ENCODE measurements at regions of chr14 and their contacts with region 1.

Region 1: GRCh38 chr14:69090187-69090789 is 62.6 kb downstream of the DCAF5 start:
- DNase-seq: peak; percentile 70
- H3K4me3 Mint-ChIP-seq: no peak overlapping the region
- H3K27ac Mint-ChIP-seq: no peak overlapping the region
- H3K4me1 Mint-ChIP-seq: peaks cover 34% of the 10 kb centered on the region
- H3K27me3 Mint-ChIP-seq: no peaks in the 10 kb centered on the region
- CTCF ChIP-seq: peak; percentile 64

Region 2: DNA sequence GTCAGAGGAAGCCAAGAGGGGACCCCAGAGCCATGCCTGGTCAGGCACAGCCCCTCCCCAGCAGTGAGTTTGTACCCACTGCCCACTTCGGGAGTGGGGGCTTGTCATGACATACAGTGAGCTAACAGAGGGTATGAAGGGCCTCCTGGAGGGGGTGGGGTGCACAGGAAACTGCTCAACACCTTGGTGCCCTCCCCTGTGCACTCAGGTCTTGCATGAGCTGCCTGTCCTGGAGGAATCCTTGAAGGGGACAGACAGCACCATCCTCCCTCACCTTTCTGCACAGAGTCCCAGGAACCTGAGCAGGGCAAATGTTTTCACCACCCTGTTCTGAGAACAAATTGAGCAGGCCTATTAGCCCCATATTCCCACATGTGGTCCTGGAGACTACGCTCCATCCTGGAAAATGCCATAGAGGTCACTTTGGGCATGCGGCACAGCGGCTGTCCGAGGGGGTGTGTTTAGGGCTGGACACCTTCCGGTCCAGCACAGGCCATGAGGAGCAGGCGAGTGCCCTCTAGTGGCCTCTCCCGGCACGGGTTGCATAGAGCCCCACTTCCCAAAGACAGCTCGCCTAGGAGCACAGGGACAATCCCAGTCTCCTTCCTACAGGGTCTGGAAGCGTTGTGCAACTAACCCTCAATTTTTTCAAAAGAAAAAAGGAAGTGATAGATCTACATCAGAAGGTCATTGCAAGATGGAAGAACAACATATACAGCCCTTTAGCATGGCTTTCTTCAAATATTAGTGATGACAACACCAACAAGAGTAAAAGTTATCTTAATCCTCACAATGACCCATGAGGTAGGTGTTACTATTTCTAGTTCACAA is 265.6 kb before region 1 on chr14:
- CTCF ChIA-PET with region 1: no interaction called
- intact Hi-C with region 1: no loop called
- DNase-seq: peak; percentile 90
- H3K4me3 Mint-ChIP-seq: no peak overlapping the region
- H3K27ac Mint-ChIP-seq: peak overlapping the region; percentile 50
- H3K4me1 Mint-ChIP-seq: peaks cover 14% of the 10 kb centered on the region
- H3K27me3 Mint-ChIP-seq: no peaks in the 10 kb centered on the region
- CTCF ChIP-seq: peak; percentile 41

Region 3: DNA sequence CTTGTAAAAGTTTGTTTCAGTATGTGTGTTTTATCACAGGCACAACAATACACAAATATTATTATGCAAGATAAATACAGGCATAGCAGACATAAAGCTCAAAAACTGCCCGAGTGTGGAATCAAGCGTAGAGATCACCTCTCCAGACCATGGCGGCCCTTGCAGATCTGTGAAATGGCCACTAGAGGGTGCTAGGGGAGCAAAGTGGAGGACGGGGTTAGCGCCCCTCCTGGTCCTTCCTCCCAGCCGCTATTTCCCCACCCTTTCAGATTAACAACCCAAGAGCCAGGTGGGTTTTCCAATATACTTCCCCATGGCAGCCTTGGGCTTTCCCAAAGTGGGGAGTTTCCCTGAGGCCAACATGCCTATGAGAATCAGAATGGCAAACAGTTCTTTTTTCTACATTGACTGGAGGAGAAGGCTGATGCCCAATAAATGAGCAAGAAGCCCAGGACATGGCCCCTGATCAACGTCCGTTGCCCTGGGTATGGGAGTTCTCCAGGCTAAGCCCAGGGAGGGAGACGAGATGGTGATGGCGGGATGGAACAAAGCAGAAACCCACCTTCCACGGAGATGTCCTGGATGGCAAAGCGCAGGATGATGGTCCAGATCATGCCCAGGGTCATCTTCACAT is 178.6 kb before region 1 on chr14:
- CTCF ChIA-PET with region 1: interaction called, 5 read pairs
- intact Hi-C with region 1: loop called (anchors 1 kb)
- DNase-seq: peak; percentile 79
- H3K4me3 Mint-ChIP-seq: no peak overlapping the region
- H3K27ac Mint-ChIP-seq: peak overlapping the region; percentile 67
- H3K4me1 Mint-ChIP-seq: no peaks in the 10 kb centered on the region
- H3K27me3 Mint-ChIP-seq: no peaks in the 10 kb centered on the region
- CTCF ChIP-seq: peak; percentile 93

Region 4: DNA sequence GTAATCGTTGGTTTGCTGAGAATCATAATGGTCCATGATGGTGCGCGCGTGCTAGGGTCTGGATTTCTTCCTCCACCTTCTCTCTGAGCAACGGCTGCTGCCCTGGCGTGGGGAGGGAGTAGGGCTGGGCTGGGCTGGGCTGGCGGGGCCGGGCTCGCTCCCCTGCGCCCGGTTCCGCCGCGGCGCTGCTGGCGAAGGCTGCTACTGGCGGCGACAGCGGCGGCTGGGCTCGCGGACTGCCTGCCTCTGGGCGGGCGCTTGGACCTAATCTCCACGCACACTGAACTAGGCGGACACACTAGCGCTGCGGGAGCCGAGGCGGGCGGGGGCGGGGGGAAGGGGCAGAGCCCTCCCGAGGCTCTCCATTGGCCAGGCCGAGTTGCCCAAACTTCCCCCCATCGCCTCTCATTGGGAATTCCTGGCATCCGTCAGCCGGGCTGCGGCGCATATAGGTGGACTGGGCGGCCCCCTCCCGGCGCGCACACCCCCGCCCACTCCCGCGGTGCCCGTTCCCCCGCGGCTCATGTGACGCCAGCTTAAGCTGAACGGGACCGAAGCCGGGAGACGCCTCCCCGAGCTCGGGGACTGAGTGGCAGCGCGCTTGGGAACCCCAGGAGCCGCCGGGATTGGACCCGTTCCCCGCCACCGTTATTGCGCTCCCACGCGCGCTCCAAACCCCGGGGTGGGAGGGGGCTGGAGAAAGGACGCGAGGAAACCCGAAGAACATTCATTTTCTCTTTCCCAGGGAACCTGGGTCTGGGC is 111.1 kb before region 1 on chr14 and contains the start of gene ACTN1:
- CTCF ChIA-PET with region 1: interaction called, 8 read pairs
- intact Hi-C with region 1: loop called (anchors 2 kb)
- DNase-seq: peak; percentile 95
- H3K4me3 Mint-ChIP-seq: peak within 1 kb of the TSS; percentile 79
- H3K27ac Mint-ChIP-seq: peak within 1 kb of the TSS; percentile 71
- H3K4me1 Mint-ChIP-seq: peaks cover 54% of the 10 kb centered on the region
- H3K27me3 Mint-ChIP-seq: no peaks in the 10 kb centered on the region
- CTCF ChIP-seq: no peak
- total RNA-seq, gene ACTN1: 246 and 326 TPM in 2 replicates

Region 5: GRCh38 chr14:69048456-69048855 is 41.8 kb before region 1 on chr14:
- CTCF ChIA-PET with region 1: no interaction called
- intact Hi-C with region 1: no loop called
- DNase-seq: peak; percentile 53
- H3K4me3 Mint-ChIP-seq: no peak overlapping the region
- H3K27ac Mint-ChIP-seq: no peak overlapping the region
- H3K4me1 Mint-ChIP-seq: peaks cover 17% of the 10 kb centered on the region
- H3K27me3 Mint-ChIP-seq: no peaks in the 10 kb centered on the region
- CTCF ChIP-seq: no peak

Region 6: DNA sequence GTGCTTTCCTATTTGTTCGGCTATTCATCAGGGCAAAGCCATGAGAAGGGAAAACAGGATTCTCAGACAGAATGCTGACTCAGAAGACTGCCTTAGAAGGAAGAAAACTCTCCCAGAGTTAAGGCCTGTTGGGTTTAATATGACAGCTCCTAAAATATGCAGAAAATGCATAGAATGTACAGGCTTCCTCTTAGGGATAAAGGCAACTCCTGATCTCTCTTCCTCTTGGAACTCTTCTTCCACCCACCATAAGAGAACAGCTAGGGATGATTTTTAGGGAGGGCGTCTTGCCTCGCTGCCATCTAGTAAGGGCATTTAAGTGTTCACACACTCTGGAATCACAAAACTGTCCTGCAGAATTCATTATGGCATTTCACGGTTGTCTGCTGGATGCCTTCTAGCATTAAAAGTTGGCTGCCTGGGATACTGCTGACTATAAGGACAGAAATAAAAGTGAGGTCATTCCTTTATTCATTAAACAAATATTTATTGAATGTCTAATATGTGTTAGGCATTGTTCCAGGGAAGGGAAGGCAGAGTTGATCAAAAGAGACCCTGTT is 11.0 kb before region 1 on chr14:
- CTCF ChIA-PET with region 1: interaction called, 7 read pairs
- intact Hi-C with region 1: loop called (anchors 2 kb)
- DNase-seq: peak; percentile 46
- H3K4me3 Mint-ChIP-seq: peak overlapping the region; percentile 54
- H3K27ac Mint-ChIP-seq: peak overlapping the region; percentile 98
- H3K4me1 Mint-ChIP-seq: peaks cover 71% of the 10 kb centered on the region
- H3K27me3 Mint-ChIP-seq: no peaks in the 10 kb centered on the region
- CTCF ChIP-seq: no peak

Region 7: DNA sequence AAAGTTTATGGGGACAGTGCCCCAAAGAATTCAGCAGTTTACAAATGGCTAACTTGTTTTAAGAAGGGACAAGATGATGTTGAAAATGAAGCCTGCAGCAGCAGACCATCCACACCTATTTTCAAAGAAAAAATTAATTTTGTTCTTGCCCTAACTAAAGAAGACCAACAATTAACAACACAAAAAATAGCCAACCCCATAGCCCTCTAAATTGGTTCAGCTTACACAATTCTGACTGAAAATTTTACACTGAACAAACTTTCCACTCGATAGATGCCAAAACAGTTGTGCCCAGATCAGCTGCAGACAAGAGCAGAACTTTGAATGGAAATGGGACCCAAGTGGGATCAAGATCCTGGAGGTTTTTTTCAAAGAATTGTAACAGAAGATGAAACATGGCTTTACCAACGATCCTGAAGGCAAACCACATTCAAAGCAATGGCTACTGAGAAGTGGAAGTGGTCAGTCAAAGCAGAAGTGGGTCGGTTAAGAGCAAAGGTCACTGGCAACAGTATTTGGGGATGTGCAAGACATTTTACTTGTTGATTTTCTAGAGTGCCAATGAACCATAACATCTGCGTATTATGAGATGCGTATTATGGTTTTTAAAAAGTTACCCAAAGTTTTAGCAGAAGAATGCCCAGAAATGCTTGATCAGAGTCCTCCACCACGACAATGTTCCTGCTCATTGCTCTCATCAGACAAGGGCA is 338.2 kb after region 1 on chr14:
- CTCF ChIA-PET with region 1: no interaction called
- intact Hi-C with region 1: no loop called
- DNase-seq: no peak
- H3K4me3 Mint-ChIP-seq: no peak overlapping the region
- H3K27ac Mint-ChIP-seq: no peak overlapping the region
- H3K4me1 Mint-ChIP-seq: no peaks in the 10 kb centered on the region
- H3K27me3 Mint-ChIP-seq: no peaks in the 10 kb centered on the region
- CTCF ChIP-seq: no peak

Region 8: DNA sequence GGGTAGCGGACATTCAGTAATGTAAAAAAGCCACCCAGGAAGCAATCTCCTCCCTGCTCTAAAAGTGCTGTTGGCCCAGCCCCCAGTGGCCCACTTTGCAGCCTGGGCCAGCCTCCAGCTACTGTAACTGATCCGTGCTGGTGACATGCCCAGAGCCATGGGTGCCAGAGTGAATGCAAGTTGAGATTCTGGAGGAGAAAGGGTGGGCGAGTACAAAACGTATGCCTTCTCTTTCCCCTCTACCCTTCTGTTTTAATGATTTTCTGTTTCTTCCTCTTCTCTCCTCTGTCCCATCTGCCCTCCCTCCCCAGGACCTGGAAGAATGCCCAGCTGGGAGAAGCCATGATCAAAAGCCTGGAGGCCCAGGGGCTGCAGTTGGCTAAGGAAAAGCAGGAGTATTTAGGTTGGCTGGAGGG is 411.1 kb after region 1 on chr14:
- CTCF ChIA-PET with region 1: no interaction called
- intact Hi-C with region 1: no loop called
- DNase-seq: no peak
- H3K4me3 Mint-ChIP-seq: no peak overlapping the region
- H3K27ac Mint-ChIP-seq: no peak overlapping the region
- H3K4me1 Mint-ChIP-seq: no peaks in the 10 kb centered on the region
- H3K27me3 Mint-ChIP-seq: peaks cover 42% of the 10 kb centered on the region
- CTCF ChIP-seq: no peak

Measured in Calu3 (cell line).